WTC11 (cell line): ENCODE measurements at regions of chr2 and their contacts with region 1.

Region 1: DNA sequence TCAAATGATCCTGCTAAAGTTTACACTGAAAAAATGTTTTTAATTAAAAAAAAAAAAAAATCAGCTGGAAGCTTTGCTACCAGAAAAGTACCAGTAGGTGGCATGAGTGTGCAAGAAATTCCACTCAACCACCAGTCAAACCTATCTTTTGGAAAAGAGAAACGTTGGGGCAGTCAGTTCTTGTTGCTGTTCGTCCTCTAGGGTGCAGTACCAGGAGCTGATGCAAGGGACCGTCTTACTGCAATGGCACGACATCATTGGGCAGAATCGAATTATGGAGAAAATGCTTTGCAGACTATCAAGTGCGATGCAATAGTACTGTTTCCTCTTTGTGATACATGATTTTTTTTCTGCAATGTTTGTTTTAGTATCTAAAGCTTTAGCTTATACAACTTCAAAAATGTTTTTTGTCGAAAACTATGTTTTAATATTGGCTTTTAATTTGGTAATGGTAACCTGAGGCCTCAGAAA is 18.3 kb downstream of the YPEL5 start:
- DNase-seq: peak; percentile 54
- ATAC-seq: peak; percentile 97
- H3K4me3 Mint-ChIP-seq: no peak overlapping the region
- H3K27ac Mint-ChIP-seq: no peak overlapping the region
- H3K4me1 Mint-ChIP-seq: peaks cover 22% of the 10 kb centered on the region
- H3K27me3 Mint-ChIP-seq: no peaks in the 10 kb centered on the region
- CTCF ChIP-seq: peak; percentile 73

Region 2: GRCh38 chr2:30178618-30179434 is 13.7 kb after region 1 on chr2:
- CTCF ChIA-PET with region 1: interaction called, 15 read pairs
- POLR2A ChIA-PET with region 1: no interaction called
- DNase-seq: no peak
- ATAC-seq: no peak
- H3K4me3 Mint-ChIP-seq: no peak overlapping the region
- H3K27ac Mint-ChIP-seq: no peak overlapping the region
- H3K4me1 Mint-ChIP-seq: no peaks in the 10 kb centered on the region
- H3K27me3 Mint-ChIP-seq: no peaks in the 10 kb centered on the region
- CTCF ChIP-seq: no peak

Region 3: GRCh38 chr2:30208452-30208851 is 43.4 kb after region 1 on chr2:
- CTCF ChIA-PET with region 1: interaction called, 40 read pairs
- POLR2A ChIA-PET with region 1: no interaction called
- DNase-seq: peak; percentile 59
- ATAC-seq: peak; percentile 99
- H3K4me3 Mint-ChIP-seq: no peak overlapping the region
- H3K27ac Mint-ChIP-seq: no peak overlapping the region
- H3K4me1 Mint-ChIP-seq: peaks cover 6% of the 10 kb centered on the region
- H3K27me3 Mint-ChIP-seq: no peaks in the 10 kb centered on the region
- CTCF ChIP-seq: peak; percentile 82

Region 4: DNA sequence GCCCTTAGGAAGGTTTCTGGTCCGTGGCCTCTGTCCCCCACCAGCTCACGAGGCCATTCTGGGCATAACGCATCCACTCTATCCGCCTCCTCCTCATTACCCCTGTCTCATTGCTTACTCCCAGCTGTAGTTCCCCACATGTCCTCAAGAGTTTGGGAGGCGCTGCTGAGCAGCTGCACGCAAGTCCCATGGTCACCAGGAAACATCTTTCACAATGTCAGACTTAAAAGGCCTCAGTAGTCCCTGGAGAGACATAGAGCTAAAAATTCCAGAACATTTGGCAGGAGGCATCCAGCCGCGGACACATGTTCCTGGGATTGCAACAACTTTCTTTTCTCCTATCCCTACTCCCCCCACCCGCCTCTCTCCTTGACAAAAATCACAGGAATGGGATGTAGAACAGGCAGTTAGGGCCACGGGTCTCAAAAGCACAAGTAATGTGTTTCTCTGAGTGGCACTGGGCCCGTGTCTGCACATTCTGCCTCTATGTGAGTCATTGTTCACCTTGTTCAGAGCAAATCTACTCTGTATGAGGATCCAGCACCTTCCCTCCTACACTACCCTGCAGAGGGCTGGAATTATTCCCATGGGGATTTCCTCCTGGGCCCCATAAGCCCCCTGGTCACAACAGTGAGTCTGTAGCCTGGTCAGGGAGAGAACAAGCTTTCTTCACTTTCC is 74.4 kb after region 1 on chr2:
- CTCF ChIA-PET with region 1: interaction called, 18 read pairs
- POLR2A ChIA-PET with region 1: no interaction called
- DNase-seq: peak; percentile 84
- ATAC-seq: peak; percentile 94
- H3K4me3 Mint-ChIP-seq: no peak overlapping the region
- H3K27ac Mint-ChIP-seq: 0 out of 2 replicates have a peak overlapping the region, but pooled peaks have one; percentile 18
- H3K4me1 Mint-ChIP-seq: peaks cover 26% of the 10 kb centered on the region
- H3K27me3 Mint-ChIP-seq: no peaks in the 10 kb centered on the region
- CTCF ChIP-seq: peak; percentile 97

Region 5: DNA sequence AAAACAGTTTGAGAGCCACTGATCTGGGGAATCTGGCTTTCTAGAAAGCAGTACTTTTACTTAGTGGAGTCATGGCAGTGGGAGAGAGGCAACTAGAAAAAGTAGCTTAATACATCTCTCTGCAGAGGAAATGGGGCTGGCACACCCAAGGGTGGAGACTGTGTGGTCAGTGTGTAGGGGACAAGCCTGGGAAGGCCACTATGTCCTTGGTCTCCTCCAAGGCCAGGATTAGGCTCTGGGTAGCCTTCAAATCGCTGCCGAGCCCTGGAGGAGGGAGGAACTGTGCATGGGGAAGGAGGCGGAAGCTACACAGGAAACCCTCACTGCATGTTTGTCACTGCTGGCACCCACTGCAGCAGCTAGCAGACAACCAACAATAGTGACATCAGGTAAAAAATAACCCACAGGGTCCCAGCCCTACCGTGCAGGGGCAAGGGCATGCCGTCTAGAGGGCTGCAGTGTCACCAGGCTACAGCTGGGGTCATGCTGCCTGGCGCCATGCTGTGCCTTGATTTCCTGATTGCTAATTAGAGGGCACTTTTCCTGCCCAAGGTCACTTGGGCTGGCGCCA is 101.1 kb after region 1 on chr2:
- CTCF ChIA-PET with region 1: no interaction called
- POLR2A ChIA-PET with region 1: no interaction called
- DNase-seq: no peak
- ATAC-seq: no peak
- H3K4me3 Mint-ChIP-seq: no peak overlapping the region
- H3K27ac Mint-ChIP-seq: no peak overlapping the region
- H3K4me1 Mint-ChIP-seq: peaks cover 28% of the 10 kb centered on the region
- H3K27me3 Mint-ChIP-seq: no peaks in the 10 kb centered on the region
- CTCF ChIP-seq: no peak

Region 6: GRCh38 chr2:30321466-30321865 is 156.4 kb after region 1 on chr2:
- CTCF ChIA-PET with region 1: no interaction called
- POLR2A ChIA-PET with region 1: no interaction called
- DNase-seq: no peak
- ATAC-seq: no peak
- H3K4me3 Mint-ChIP-seq: no peak overlapping the region
- H3K27ac Mint-ChIP-seq: no peak overlapping the region
- H3K4me1 Mint-ChIP-seq: peaks cover 22% of the 10 kb centered on the region
- H3K27me3 Mint-ChIP-seq: peaks cover 4% of the 10 kb centered on the region; the same call in 1 of the 2 replicates
- CTCF ChIP-seq: no peak

Region 7: GRCh38 chr2:30686000-30686399 is 520.9 kb after region 1 on chr2:
- CTCF ChIA-PET with region 1: interaction called, 15 read pairs
- POLR2A ChIA-PET with region 1: interaction called, 3 read pairs
- DNase-seq: peak; percentile 54
- ATAC-seq: peak; percentile 88
- H3K4me3 Mint-ChIP-seq: no peak overlapping the region
- H3K27ac Mint-ChIP-seq: no peak overlapping the region
- H3K4me1 Mint-ChIP-seq: peaks cover 16% of the 10 kb centered on the region
- H3K27me3 Mint-ChIP-seq: no peaks in the 10 kb centered on the region
- CTCF ChIP-seq: no peak